ENCODE measurements at regions of chr7 and their contacts with region 1.

Region 1: GRCh38 chr7:99143853-99144672 is at the start of gene SMURF1:
- DNase-seq: peak; percentile 81 to 90
- ATAC-seq: peak; percentile 83
- H3K4me3 ChIP-seq: peak within 1 kb of the TSS; percentile 96 to 98
- H3K27ac ChIP-seq: peak within 1 kb of the TSS; percentile 94 to 99
- H3K4me1 ChIP-seq: no peaks in the 10 kb centered on the region
- H3K27me3 ChIP-seq: no peaks in the 10 kb centered on the region
- total RNA-seq, gene SMURF1: 37.1 to 47.9 TPM

Region 2: DNA sequence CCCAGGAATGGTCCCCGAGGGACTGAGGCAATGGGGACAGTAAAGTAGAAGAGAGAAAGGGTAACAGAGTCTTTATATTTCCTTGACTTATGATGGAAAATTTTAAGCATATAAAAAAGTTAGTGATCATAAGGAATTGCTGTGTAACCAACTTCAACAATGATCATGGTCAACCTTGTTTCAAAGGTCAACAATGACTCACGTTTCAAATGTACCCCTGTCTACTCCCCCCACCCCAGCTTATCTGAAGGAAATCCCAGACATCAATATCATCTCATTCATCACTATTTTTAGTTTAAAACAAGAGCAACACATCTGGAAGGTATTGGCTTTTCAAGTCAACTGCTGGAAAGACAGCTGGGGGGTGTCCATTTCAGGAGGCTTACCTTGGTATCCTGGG is 93.1 kb before region 1 on chr7:
- intact Hi-C with region 1: loop called in 1 of 2 experiments (anchors 2 kb)
- DNase-seq: no peak
- ATAC-seq: no peak
- H3K4me3 ChIP-seq: no peak overlapping the region
- H3K27ac ChIP-seq: no peak overlapping the region
- H3K4me1 ChIP-seq: no peaks in the 10 kb centered on the region
- H3K27me3 ChIP-seq: no peaks in the 10 kb centered on the region

Region 3: GRCh38 chr7:99098824-99099498 is 45.1 kb before region 1 on chr7:
- intact Hi-C with region 1: loop called in 1 of 2 experiments (anchors 5 kb)
- DNase-seq: no peak
- ATAC-seq: peak; percentile 73
- H3K4me3 ChIP-seq: no peak overlapping the region
- H3K27ac ChIP-seq: peak overlapping the region in 1 of 2 donors; percentile 75
- H3K4me1 ChIP-seq: peaks cover 4 to 10% of the 10 kb centered on the region in 2 donors
- H3K27me3 ChIP-seq: no peaks in the 10 kb centered on the region

Region 4: DNA sequence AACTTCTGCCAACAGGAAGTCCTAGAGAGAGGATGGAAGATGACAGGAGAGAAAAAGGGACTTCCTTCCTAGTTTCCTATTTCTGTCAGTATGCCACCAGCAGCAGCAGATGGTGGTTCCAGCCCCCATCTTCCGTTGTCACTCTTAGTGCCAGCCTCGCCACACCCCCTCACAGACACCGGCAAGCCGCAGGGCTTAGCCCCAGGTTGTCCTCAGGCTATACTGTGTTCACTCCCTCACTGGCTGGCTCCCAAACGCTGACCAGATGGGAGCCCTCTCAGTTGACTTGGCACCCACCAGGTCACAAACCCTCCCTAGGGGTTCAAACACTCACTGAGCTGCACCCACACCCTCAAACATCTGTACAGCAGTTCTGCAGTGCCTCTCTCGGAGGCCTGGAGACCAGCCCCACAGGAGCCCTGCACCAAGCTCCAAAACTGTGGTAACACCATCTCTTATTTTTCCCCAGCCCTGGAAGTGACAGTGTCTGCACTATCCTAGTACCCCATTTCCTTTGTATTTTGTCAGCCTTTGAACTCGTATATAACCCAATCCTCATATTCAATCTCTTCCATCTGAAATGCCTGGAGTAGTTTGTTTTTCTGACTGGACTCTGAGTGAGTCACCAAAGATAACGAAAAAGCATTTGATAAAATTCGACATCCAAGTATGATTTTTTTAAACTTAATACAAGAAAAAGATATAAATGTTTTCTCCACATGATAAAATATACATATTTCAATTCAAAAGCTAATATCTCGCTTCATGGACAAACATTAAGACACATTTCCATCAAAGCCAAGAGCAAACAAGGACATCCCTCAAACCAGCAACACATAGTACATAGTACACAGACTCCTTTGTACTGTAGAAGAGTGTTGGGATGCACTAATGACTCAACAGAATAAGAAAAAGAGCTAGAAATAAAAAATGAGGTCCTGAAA is 34.7 kb before region 1 on chr7:
- intact Hi-C with region 1: loop called in 1 of 2 experiments (anchors 5 kb)
- DNase-seq: no peak
- ATAC-seq: peak; percentile 52
- H3K4me3 ChIP-seq: no peak overlapping the region
- H3K27ac ChIP-seq: peak overlapping the region; percentile 68 to 91
- H3K4me1 ChIP-seq: peaks cover 13 to 30% of the 10 kb centered on the region in 2 donors
- H3K27me3 ChIP-seq: no peaks in the 10 kb centered on the region

Region 5: GRCh38 chr7:99312316-99313203 is 168.5 kb after region 1 on chr7:
- intact Hi-C with region 1: loop called (anchors 2 to 5 kb)
- DNase-seq: peak; percentile 79 to 87
- ATAC-seq: peak; percentile 86
- H3K4me3 ChIP-seq: no peak overlapping the region
- H3K27ac ChIP-seq: no peak overlapping the region
- H3K4me1 ChIP-seq: no peaks in the 10 kb centered on the region
- H3K27me3 ChIP-seq: no peaks in the 10 kb centered on the region